ENCODE measurements at regions of chr17 and their contacts with region 1.

Region 1: GRCh38 chr17:81702971-81703746 is at the start of gene MRPL12:
- DNase-seq: peak; percentile 93 to 95
- H3K4me3 ChIP-seq: peak within 1 kb of the TSS; percentile 86
- H3K4me3 Mint-ChIP-seq: peak within 1 kb of the TSS; percentile 93
- H3K27ac Mint-ChIP-seq: peak within 1 kb of the TSS; percentile 98
- H3K4me1 ChIP-seq: peaks cover 18% of the 10 kb centered on the region
- H3K4me1 Mint-ChIP-seq: peaks cover 23% of the 10 kb centered on the region
- H3K27me3 ChIP-seq: no peaks in the 10 kb centered on the region
- H3K27me3 Mint-ChIP-seq: no peaks in the 10 kb centered on the region
- CTCF ChIP-seq: peak; percentile 28 to 33
- total RNA-seq, gene MRPL12: 164 and 176 TPM in 2 replicates

Region 2: GRCh38 chr17:81273698-81274470 is 429.3 kb before region 1 on chr17:
- CTCF ChIA-PET with region 1: no interaction called
- POLR2A ChIA-PET with region 1: interaction called, 12 read pairs
- intact Hi-C with region 1: no loop called
- DNase-seq: no peak
- H3K4me3 ChIP-seq: no peak overlapping the region
- H3K4me3 Mint-ChIP-seq: no peak overlapping the region
- H3K27ac Mint-ChIP-seq: no peak overlapping the region
- H3K4me1 ChIP-seq: no peaks in the 10 kb centered on the region
- H3K4me1 Mint-ChIP-seq: no peaks in the 10 kb centered on the region
- H3K27me3 ChIP-seq: no peaks in the 10 kb centered on the region
- H3K27me3 Mint-ChIP-seq: no peaks in the 10 kb centered on the region
- CTCF ChIP-seq: no peak

Region 3: DNA sequence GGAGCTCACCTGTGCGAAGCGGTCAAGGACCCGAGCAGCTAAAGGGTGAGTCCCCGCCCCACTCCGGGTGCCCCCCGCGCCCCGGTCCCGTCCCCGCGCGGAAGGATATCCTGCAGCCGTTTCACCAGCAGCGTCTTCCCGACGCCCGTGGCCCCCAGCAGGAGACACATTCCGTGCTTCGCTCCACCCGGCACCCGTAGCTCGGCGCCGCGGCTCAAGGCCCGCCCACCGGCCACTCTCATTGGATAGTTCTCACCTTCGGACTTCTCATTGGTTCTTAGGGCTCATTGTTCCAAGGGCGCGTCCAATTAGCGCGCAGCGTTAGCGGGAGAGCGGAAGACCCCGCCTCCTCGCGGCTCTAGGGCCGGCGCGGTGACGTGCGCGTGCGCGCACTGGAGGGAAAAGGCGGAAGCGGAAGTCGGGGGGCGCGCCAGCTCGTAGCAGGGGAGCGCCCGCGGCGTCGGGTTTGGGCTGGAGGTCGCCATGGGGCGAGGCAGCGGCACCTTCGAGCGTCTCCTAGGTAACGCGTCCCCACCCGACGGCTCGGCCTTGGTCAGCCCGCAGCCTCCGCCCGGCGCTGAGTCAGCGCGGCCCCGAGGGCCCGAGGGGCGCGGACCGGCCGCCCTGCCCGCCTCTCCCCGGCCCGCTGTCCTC is 19.4 kb before region 1 on chr17 and contains the starts of genes ARL16 and HGS:
- CTCF ChIA-PET with region 1: interaction called, 4 read pairs
- POLR2A ChIA-PET with region 1: interaction called, 45 read pairs
- intact Hi-C with region 1: loop called (anchors 1 kb)
- DNase-seq: peak; percentile 98 to 99
- H3K4me3 ChIP-seq: peak within 1 kb of the TSS; percentile 89
- H3K4me3 Mint-ChIP-seq: peak within 1 kb of the TSS; percentile 97
- H3K27ac Mint-ChIP-seq: peak within 1 kb of the TSS; percentile 95
- H3K4me1 ChIP-seq: 0 out of 2 replicates have a peak, but pooled peaks cover 10% of the 10 kb centered on the region
- H3K4me1 Mint-ChIP-seq: no peaks in the 10 kb centered on the region
- H3K27me3 ChIP-seq: no peaks in the 10 kb centered on the region
- H3K27me3 Mint-ChIP-seq: no peaks in the 10 kb centered on the region
- CTCF ChIP-seq: no peak
- total RNA-seq, gene ARL16: 45.1 and 49.8 TPM in 2 replicates
- total RNA-seq, gene HGS: 176 and 178 TPM in 2 replicates

Region 4: DNA sequence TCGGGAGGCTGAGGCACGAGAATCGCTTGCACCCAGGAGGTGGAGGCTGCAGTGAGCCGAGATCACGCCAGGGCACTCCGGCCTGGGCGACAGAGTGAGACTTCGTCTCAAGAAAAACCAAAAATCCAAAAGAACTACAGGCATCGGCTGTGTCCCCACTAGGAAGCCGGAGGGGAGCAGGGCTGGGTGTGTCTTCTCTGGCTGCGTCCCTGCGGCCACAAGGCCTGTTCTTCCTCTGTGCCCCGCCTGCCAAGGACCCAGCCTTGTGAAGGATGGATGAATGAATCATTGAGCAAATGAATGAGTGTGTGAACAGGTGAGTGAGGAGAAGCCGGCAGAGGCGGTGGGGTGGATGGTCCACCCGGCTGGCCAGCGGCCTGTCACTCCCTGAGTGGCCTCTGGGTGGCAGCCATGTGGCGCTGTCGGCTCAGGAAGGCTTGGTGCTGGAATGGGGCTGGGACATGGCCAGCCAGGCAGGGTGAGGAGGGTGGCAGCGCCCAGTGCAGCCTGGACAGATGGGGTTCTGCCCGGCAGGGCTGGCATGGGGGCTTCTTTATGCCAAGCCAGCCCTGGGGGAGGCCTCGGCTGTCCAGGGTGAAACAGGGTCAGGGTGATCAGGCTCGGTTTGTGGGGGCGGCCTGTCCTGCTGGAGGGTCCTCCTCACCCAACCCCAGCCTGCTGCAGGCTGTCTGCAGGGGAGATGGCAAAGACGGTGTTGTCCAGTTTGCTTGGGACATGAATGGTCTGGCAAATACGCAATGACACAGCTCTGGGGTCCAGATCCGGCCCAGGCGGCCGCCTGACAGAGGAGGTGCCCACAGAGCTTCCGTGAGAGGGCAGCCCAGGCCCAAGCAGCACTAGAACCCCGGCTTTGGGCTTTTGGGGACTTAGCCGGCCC is 30.6 kb after region 1 on chr17:
- CTCF ChIA-PET with region 1: no interaction called
- POLR2A ChIA-PET with region 1: no interaction called
- intact Hi-C with region 1: no loop called
- DNase-seq: peak; percentile 83 to 92
- H3K4me3 ChIP-seq: no peak overlapping the region
- H3K4me3 Mint-ChIP-seq: no peak overlapping the region
- H3K27ac Mint-ChIP-seq: no peak overlapping the region
- H3K4me1 ChIP-seq: peaks cover 11% of the 10 kb centered on the region; the same call in 1 of the 2 replicates
- H3K4me1 Mint-ChIP-seq: no peaks in the 10 kb centered on the region
- H3K27me3 ChIP-seq: no peaks in the 10 kb centered on the region
- H3K27me3 Mint-ChIP-seq: no peaks in the 10 kb centered on the region
- CTCF ChIP-seq: peak; percentile 95 to 97

Region 5: DNA sequence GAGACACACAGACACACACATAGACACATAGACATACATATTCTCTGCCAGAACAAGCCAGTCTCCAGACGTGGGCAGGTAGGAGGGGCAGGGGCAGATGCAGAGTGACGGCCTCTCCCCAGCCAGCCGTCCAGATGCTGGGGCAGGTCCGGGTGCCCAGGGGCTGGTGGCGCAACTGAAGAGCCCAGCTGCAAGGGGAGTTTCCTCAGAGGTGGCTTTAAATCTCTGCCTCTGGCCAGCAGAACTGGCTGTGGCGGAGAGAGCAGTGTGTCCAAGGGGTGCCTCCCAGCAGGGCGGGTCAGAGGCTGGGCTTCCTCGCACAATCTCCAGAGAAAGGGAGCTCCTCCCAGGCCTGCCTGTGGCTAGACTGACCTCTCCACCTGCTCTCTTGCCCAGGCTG is 91.3 kb after region 1 on chr17:
- CTCF ChIA-PET with region 1: no interaction called
- POLR2A ChIA-PET with region 1: no interaction called
- intact Hi-C with region 1: no loop called
- DNase-seq: peak in 1 of 2 experiments; percentile 59
- H3K4me3 ChIP-seq: no peak overlapping the region
- H3K4me3 Mint-ChIP-seq: no peak overlapping the region
- H3K27ac Mint-ChIP-seq: no peak overlapping the region
- H3K4me1 ChIP-seq: peaks cover 5% of the 10 kb centered on the region; the same call in 1 of the 2 replicates
- H3K4me1 Mint-ChIP-seq: no peaks in the 10 kb centered on the region
- H3K27me3 ChIP-seq: no peaks in the 10 kb centered on the region
- H3K27me3 Mint-ChIP-seq: no peaks in the 10 kb centered on the region
- CTCF ChIP-seq: no peak

Region 6: GRCh38 chr17:81804559-81805399 is 101.6 kb after region 1 on chr17:
- CTCF ChIA-PET with region 1: interaction called, 11 read pairs
- POLR2A ChIA-PET with region 1: no interaction called
- intact Hi-C with region 1: no loop called
- DNase-seq: no peak
- H3K4me3 ChIP-seq: peak overlapping the region; percentile 32
- H3K4me3 Mint-ChIP-seq: peak overlapping the region; percentile 55
- H3K27ac Mint-ChIP-seq: no peak overlapping the region
- H3K4me1 ChIP-seq: peaks cover 14% of the 10 kb centered on the region
- H3K4me1 Mint-ChIP-seq: peaks cover 11% of the 10 kb centered on the region
- H3K27me3 ChIP-seq: no peaks in the 10 kb centered on the region
- H3K27me3 Mint-ChIP-seq: peaks cover 24% of the 10 kb centered on the region
- CTCF ChIP-seq: no peak

Region 7: GRCh38 chr17:81814748-81815645 is 111.8 kb after region 1 on chr17:
- CTCF ChIA-PET with region 1: no interaction called
- POLR2A ChIA-PET with region 1: no interaction called
- intact Hi-C with region 1: no loop called
- DNase-seq: peak; percentile 69 to 77
- H3K4me3 ChIP-seq: no peak overlapping the region
- H3K4me3 Mint-ChIP-seq: no peak overlapping the region
- H3K27ac Mint-ChIP-seq: no peak overlapping the region
- H3K4me1 ChIP-seq: peaks cover 9% of the 10 kb centered on the region
- H3K4me1 Mint-ChIP-seq: peaks cover 6% of the 10 kb centered on the region
- H3K27me3 ChIP-seq: no peaks in the 10 kb centered on the region
- H3K27me3 Mint-ChIP-seq: no peaks in the 10 kb centered on the region
- CTCF ChIP-seq: no peak

Region 8: DNA sequence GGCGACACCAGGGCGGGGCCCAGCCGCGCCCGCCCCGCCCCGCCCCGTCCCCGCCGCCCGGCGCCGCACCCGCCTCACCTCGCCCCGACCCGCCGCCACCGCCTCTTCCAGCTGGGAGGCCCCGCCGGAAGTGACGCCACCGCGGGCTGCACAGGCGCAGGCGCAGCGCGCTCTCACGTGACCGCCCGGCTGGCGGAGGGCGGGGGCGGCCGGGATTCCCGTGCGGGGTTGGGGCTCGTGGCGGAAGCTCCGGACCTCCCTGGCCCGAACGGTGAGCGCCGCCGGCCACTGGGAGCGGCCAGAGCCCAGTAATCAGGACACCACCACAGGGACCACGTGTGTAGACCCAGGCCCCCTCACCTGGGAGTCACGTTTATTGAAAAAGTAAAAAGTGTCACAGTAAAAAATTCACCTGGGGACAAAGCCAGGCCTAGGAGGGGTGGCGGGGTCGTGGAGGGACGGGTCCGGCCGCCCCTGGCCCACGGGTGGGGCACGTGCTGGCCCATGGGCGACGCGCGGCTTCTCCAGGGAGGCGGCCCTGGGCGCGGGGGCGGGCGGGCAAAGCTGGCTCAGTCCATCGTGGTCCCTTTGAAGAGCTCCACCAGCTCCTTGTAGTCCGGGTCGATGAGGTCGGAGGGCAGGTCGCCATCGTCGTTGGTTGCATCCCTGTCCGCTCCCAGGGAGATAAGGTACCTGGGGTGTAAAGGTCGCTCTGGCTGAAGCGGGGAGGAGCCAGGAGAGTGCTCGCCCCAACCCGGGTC is 130.2 kb after region 1 on chr17 and contains the start of gene MCRIP1:
- CTCF ChIA-PET with region 1: no interaction called
- POLR2A ChIA-PET with region 1: interaction called, 12 read pairs
- intact Hi-C with region 1: no loop called
- DNase-seq: peak; percentile 96 to 99
- H3K4me3 ChIP-seq: peak within 1 kb of the TSS; percentile 85
- H3K4me3 Mint-ChIP-seq: peak within 1 kb of the TSS; percentile 90
- H3K27ac Mint-ChIP-seq: peak within 1 kb of the TSS; percentile 92
- H3K4me1 ChIP-seq: peaks cover 29% of the 10 kb centered on the region
- H3K4me1 Mint-ChIP-seq: peaks cover 20% of the 10 kb centered on the region
- H3K27me3 ChIP-seq: no peaks in the 10 kb centered on the region
- H3K27me3 Mint-ChIP-seq: no peaks in the 10 kb centered on the region
- CTCF ChIP-seq: no peak
- total RNA-seq, gene MCRIP1: 59.7 and 60.0 TPM in 2 replicates

Region 9: GRCh38 chr17:81941790-81942553 is 238.8 kb after region 1 on chr17:
- CTCF ChIA-PET with region 1: no interaction called
- POLR2A ChIA-PET with region 1: no interaction called
- intact Hi-C with region 1: no loop called
- DNase-seq: no peak
- H3K4me3 ChIP-seq: no peak overlapping the region
- H3K4me3 Mint-ChIP-seq: no peak overlapping the region
- H3K27ac Mint-ChIP-seq: no peak overlapping the region
- H3K4me1 ChIP-seq: peaks cover 9% of the 10 kb centered on the region
- H3K4me1 Mint-ChIP-seq: peaks cover 5% of the 10 kb centered on the region
- H3K27me3 ChIP-seq: no peaks in the 10 kb centered on the region
- H3K27me3 Mint-ChIP-seq: no peaks in the 10 kb centered on the region
- CTCF ChIP-seq: no peak

Measured in Caco-2 (cell line).